IMR-90 (cell line): ENCODE measurements at regions of chr1 and their contacts with region 1.

Region 1: GRCh38 chr1:221925947-221926346 is 184.1 kb upstream of the DUSP10 start:
- DNase-seq: peak; percentile 4
- ATAC-seq: no peak
- H3K4me3 ChIP-seq: no peak overlapping the region
- H3K27ac ChIP-seq: no peak overlapping the region
- H3K4me1 ChIP-seq: no peaks in the 10 kb centered on the region
- H3K27me3 ChIP-seq: no peaks in the 10 kb centered on the region
- CTCF ChIP-seq: no peak
- POLR2A ChIP-seq: no peak
- RAD21 ChIP-seq: no peak

Region 2: DNA sequence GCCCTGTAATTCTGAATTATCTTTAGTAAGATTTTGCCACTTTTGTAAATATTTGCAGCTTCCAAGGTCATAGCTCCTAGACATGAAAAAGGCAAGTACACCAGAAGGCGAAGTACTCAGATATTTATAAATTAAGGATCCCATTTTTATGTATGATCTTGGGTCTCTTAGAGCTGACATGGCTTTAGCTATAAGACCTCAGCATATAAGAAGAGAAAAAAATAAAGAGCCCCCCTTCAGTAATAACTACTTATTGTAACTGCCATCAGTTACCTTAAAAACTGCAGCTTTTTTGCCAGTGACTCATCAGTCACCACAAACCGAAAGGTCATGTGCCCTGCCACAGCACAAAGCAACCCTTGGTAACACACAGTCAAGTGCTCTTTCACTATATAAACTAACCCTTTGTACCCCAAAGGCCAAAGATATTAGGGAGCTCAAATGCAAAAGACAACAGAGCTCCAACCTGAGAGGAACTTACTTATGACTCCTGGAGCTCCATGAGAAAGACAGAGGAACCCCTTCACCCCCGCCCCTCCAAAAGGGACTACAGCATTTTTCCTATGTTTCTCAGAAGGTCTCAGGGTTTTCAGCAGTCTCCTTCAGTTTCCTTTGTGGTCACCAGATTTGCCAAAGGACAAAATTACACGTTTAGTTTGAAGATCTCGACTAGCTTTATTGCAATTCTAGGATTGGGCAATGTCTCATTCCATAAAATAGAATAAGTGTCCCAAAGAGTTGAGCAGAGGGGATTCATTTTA is 35.8 kb after region 1 on chr1:
- CTCF ChIA-PET with region 1: no interaction called
- POLR2A ChIA-PET with region 1: interaction called, 10 read pairs
- dilution Hi-C with region 1: no loop called
- in situ Hi-C with region 1: no loop called
- intact Hi-C with region 1: no loop called
- DNase-seq: peak; percentile 61
- ATAC-seq: peak; percentile 70
- H3K4me3 ChIP-seq: no peak overlapping the region
- H3K27ac ChIP-seq: peak overlapping the region; percentile 32; the same call in 1 of the 2 replicates
- H3K4me1 ChIP-seq: peaks cover 11% of the 10 kb centered on the region
- H3K27me3 ChIP-seq: no peaks in the 10 kb centered on the region
- CTCF ChIP-seq: no peak
- POLR2A ChIP-seq: no peak
- RAD21 ChIP-seq: no peak